H1 (cell line): ENCODE measurements at regions of chr18 and their contacts with region 1.

Region 1: DNA sequence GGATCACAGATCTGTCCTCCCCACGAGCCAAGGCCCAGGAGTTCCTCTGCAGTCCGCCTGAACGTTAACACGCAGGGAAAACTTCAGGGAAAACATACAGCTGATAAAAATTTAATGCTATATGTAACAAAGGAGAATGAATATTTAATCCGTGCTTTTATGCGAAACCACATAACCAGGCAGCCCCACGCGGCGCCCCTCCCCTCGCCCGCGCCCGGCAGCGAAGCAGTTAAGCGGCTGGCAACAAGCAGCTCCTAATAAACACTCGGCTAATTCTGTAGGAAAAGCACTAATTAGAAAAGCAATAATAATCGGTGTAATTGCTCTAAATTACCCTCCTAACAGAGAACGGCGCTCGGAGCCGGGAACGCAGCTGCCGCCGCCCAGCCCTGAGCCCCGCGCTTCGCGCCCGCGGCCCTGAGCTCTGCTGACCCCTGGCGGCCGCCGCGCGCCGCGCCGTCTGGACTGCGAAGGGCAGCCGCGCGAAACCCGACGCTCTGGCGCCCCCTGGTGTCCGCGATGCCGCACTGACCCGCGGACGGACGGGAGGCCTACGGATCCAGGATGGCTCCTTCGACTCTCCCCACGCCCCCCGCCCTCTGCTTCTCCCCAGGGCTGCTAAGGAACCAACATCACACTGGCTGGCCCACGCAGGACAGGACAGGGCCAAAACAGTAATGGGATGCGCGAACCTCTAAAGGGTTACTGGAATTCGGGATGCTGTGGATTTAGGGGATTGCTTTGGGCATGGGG is 181.4 kb downstream of the SMAD2 start:
- DNase-seq: peak; percentile 41 to 95
- H3K4me3 ChIP-seq: peak overlapping the region in 3 of 4 experiments; percentile 29 to 59 (median 30); a peak in 6 of 8 replicates
- H3K27ac ChIP-seq: no peak overlapping the region
- H3K4me1 ChIP-seq: no peaks in the 10 kb centered on the region
- H3K27me3 ChIP-seq: peaks cover 0 to 9% (median 3%) of the 10 kb centered on the region in 4 experiments; a peak in 5 of 7 replicates
- CTCF ChIP-seq: peak; percentile 98 to 100 (median 99)
- EP300 ChIP-seq: peak in 1 of 2 experiments; percentile 30; a peak in 1 of 3 replicates
- POLR2A ChIP-seq: no peak
- RAD21 ChIP-seq: peak; percentile 96 to 100

Region 2: GRCh38 chr18:47545613-47546012 is 203.4 kb before region 1 on chr18:
- CTCF ChIA-PET with region 1: interaction called, 17 read pairs
- POLR2A ChIA-PET with region 1: no interaction called
- DNase-seq: peak in 1 of 2 experiments; percentile 38
- H3K4me3 ChIP-seq: no peak overlapping the region
- H3K27ac ChIP-seq: no peak overlapping the region
- H3K4me1 ChIP-seq: no peaks in the 10 kb centered on the region
- H3K27me3 ChIP-seq: no peaks in the 10 kb centered on the region; a peak in 1 of 7 replicates
- CTCF ChIP-seq: peak; percentile 67 to 83 (median 72)
- EP300 ChIP-seq: no peak
- POLR2A ChIP-seq: no peak
- RAD21 ChIP-seq: peak; percentile 62 to 74

Region 3: DNA sequence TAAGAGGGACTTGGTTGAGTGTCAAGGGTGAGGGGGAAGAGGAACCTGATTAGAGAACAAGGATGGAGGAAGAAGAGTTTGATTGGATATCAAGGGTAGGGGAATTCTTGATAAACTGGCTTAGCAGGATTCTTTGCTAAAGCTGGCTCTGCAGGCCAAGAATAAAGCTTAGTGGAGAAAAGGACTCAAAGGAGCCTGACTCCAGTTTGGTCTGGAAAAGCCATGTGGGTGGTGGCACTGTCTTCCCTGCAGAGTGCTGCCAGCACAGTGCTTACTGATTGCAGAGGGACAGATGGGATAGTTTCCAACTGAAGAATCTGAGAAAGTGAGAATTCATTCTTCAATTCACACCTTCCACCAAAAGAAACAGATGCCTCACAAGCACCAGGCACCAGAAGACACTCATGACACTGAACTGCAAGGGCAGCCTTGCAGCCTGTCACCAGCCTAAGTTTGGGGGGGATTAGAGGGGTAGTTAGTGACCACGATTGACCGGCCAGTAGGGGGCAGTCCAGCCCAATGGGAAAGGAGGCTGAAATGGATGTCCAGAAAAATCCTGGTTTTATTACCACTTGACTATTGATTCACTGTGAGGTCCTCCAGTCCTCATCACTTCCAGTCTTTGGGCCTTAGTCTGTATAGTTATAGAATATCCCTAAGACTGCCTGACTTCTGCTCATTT is 153.1 kb before region 1 on chr18:
- CTCF ChIA-PET with region 1: interaction called, 58 read pairs
- POLR2A ChIA-PET with region 1: no interaction called
- DNase-seq: peak in 1 of 2 experiments; percentile 86
- H3K4me3 ChIP-seq: no peak overlapping the region
- H3K27ac ChIP-seq: no peak overlapping the region
- H3K4me1 ChIP-seq: peaks cover 0 to 11% (median 2%) of the 10 kb centered on the region in 4 experiments; a peak in 5 of 7 replicates
- H3K27me3 ChIP-seq: no peaks in the 10 kb centered on the region
- CTCF ChIP-seq: peak; percentile 76 to 94 (median 83)
- EP300 ChIP-seq: no peak
- POLR2A ChIP-seq: no peak
- RAD21 ChIP-seq: peak; percentile 89 to 94

Region 4: DNA sequence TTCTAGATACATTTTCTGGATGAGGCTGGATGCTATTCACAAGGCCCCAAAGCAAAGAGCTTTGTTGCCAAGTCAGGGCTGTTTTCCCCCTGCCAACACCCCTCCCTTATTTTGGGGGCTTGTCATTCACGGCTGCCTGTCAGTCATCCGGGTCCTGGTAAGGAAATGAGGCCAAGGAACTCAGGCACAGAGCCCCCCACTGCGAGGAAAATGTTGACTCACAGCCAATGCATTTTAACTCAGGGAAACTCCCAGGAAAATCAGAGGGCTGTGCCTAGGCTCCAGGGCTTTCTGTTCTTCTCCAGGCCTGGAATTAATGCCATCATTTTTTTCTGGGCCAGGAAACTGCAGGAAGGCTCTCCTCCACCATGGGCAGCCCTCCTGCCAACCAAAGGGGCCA is 59.7 kb before region 1 on chr18:
- CTCF ChIA-PET with region 1: interaction called, 10 read pairs
- POLR2A ChIA-PET with region 1: no interaction called
- DNase-seq: peak in 1 of 2 experiments; percentile 13
- H3K4me3 ChIP-seq: no peak overlapping the region
- H3K27ac ChIP-seq: no peak overlapping the region
- H3K4me1 ChIP-seq: peaks cover 0 to 11% (median 1%) of the 10 kb centered on the region in 4 experiments; a peak in 3 of 7 replicates
- H3K27me3 ChIP-seq: no peaks in the 10 kb centered on the region
- CTCF ChIP-seq: no peak
- EP300 ChIP-seq: no peak
- POLR2A ChIP-seq: no peak
- RAD21 ChIP-seq: no peak

Region 5: GRCh38 chr18:47730795-47731194 is 18.2 kb before region 1 on chr18:
- CTCF ChIA-PET with region 1: interaction called, 17 read pairs
- POLR2A ChIA-PET with region 1: no interaction called
- DNase-seq: no peak
- H3K4me3 ChIP-seq: no peak overlapping the region
- H3K27ac ChIP-seq: no peak overlapping the region
- H3K4me1 ChIP-seq: 0 out of 7 replicates have a peak, but pooled peaks cover 0 to 2% (median 0%) of the 10 kb centered on the region in 4 experiments
- H3K27me3 ChIP-seq: no peaks in the 10 kb centered on the region
- CTCF ChIP-seq: peak; percentile 16 to 39 (median 30); a peak in 3 of 4 replicates
- EP300 ChIP-seq: no peak
- POLR2A ChIP-seq: no peak
- RAD21 ChIP-seq: peak; percentile 38 to 49

Region 6: DNA sequence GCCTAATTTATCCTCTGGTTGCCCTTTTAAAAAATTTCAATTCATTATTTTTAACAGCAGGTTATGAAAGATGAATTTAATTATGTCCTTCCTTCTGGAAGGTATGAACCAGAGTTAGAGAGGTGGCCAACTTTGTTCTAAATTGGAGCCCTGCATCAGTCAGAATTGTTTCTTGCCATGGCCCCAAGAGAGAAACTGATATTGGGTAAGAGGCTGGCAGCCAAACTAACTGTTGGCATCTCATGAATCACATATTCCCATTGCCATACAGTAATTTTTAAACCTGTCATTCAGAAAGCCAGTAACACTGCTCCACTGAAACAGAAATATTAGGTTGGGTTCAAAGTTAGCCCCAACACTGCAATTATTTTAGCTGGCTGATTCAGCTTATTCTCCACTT is 114.0 kb after region 1 on chr18:
- CTCF ChIA-PET with region 1: no interaction called
- POLR2A ChIA-PET with region 1: no interaction called
- DNase-seq: no peak
- H3K4me3 ChIP-seq: no peak overlapping the region
- H3K27ac ChIP-seq: no peak overlapping the region
- H3K4me1 ChIP-seq: no peaks in the 10 kb centered on the region
- H3K27me3 ChIP-seq: no peaks in the 10 kb centered on the region
- CTCF ChIP-seq: no peak
- EP300 ChIP-seq: no peak
- POLR2A ChIP-seq: no peak
- RAD21 ChIP-seq: no peak